T-cell (primary cell): ENCODE measurements at regions of chr5 and their contacts with region 1.

Region 1: GRCh38 chr5:118987988-118988865 is at the start of gene DTWD2:
- DNase-seq: peak; percentile 81 to 95 (median 88)
- ATAC-seq: peak; percentile 88 to 95 (median 93)
- H3K4me3 ChIP-seq: peak within 1 kb of the TSS; percentile 39 to 62
- H3K4me3 Mint-ChIP-seq: peak within 1 kb of the TSS; percentile 74 to 79 (median 77)
- H3K27ac ChIP-seq: peak within 1 kb of the TSS; percentile 55
- H3K27ac Mint-ChIP-seq: peak within 1 kb of the TSS; percentile 66 to 72
- H3K4me1 ChIP-seq: peaks cover 4 to 8% of the 10 kb centered on the region in 2 experiments
- H3K4me1 Mint-ChIP-seq: peaks cover 24 to 35% (median 24%) of the 10 kb centered on the region in 3 donors
- H3K27me3 ChIP-seq: no peaks in the 10 kb centered on the region
- H3K27me3 Mint-ChIP-seq: no peaks in the 10 kb centered on the region
- total RNA-seq, gene DTWD2: 3.0 to 4.4 (median 3.2) TPM

Region 2: GRCh38 chr5:118806571-118806970 is 181.7 kb before region 1 on chr5:
- CTCF ChIA-PET with region 1: no interaction called
- POLR2A ChIA-PET with region 1: no interaction called
- DNase-seq: no peak
- ATAC-seq: no peak
- H3K4me3 ChIP-seq: no peak overlapping the region
- H3K4me3 Mint-ChIP-seq: no peak overlapping the region
- H3K27ac ChIP-seq: no peak overlapping the region
- H3K27ac Mint-ChIP-seq: no peak overlapping the region
- H3K4me1 ChIP-seq: no peaks in the 10 kb centered on the region
- H3K4me1 Mint-ChIP-seq: no peaks in the 10 kb centered on the region
- H3K27me3 ChIP-seq: no peaks in the 10 kb centered on the region
- H3K27me3 Mint-ChIP-seq: no peaks in the 10 kb centered on the region

Region 3: DNA sequence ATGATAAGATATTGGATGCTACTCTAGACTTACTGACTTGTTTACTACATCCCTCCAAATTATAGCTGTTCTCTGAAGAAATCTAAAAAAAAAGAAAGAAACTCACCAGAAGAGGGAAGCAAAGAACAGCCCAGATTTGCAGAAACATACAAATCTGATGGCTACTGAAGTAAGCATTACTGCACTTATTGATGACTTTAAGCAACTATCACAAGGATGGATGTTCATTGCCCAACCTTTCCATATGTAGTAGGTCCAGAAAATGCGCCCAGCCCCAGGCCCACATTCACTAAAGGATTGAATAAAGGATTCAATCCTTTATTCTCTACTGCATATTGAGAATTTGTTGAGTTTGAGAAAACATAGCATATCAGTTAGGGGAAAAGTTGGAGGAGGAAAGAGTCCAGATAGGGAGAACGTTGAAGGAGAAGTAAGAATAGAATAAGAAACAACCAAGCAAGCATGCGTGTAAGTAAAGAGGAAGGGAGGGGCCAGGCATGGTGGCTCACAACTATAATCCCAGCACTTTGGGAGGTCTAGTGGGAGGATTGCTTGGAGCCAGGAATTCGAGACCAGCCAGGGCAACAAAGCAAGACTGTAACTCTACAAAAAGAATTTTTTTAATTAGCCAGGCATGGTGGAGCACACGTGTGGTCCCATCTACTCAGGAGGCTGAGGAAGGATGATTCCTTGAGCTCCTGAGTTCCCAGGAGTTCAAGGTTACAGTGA is 34.0 kb after region 1 on chr5:
- CTCF ChIA-PET with region 1: interaction called, 3 to 10 read pairs
- POLR2A ChIA-PET with region 1: interaction called in 1 of 2 experiments, 3 read pairs
- DNase-seq: peak in 1 of 35 experiments; percentile 56
- ATAC-seq: peak; percentile 31 to 55 (median 48)
- H3K4me3 ChIP-seq: no peak overlapping the region
- H3K4me3 Mint-ChIP-seq: no peak overlapping the region
- H3K27ac ChIP-seq: no peak overlapping the region
- H3K27ac Mint-ChIP-seq: peak overlapping the region in 1 of 2 donors; percentile 59
- H3K4me1 ChIP-seq: no peaks in the 10 kb centered on the region
- H3K4me1 Mint-ChIP-seq: peaks cover 5 to 7% (median 5%) of the 10 kb centered on the region in 3 donors
- H3K27me3 ChIP-seq: no peaks in the 10 kb centered on the region
- H3K27me3 Mint-ChIP-seq: no peaks in the 10 kb centered on the region

Region 4: DNA sequence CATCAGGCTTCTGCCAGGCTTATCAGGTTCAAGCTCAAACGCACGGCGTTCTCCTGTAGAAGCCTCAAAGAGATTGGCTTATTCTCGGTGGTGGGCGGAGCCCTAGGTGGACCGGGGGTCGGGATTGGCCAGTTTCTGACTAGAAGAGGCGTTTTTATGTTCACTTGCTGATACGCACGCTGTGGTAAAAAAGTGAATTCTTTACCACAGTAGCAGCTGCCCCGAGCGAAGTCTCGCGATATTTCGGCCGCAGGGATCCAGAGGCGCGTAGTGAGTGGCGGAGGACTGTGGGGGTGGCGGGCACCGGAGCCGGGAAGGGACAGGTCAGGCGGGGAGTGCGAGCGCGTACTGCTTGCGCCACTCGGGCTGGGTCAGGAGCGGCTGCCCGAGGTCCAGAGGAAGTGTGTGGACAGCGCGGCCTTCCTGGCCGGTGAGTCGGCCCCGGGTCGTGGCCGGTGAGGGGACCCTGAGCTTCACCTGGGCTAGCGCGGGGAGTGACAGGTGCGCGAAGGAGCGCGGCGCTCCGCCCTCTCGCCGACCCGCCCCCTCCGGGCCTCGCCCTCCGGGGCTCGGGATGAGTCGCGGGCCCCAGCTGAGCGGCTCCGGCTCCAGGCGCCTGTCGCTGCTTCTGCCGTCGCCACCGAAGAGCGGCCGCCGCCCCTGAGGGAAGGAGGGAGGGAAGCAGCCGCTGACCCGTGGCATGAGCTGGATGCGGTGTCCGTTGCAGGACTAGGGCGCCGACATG is 82.8 kb after region 1 on chr5 and contains the start of gene DMXL1:
- CTCF ChIA-PET with region 1: interaction called in 1 of 2 experiments, 21 read pairs
- POLR2A ChIA-PET with region 1: no interaction called
- DNase-seq: peak; percentile 92 to 99 (median 98)
- ATAC-seq: peak; percentile 84 to 87 (median 86)
- H3K4me3 ChIP-seq: peak within 1 kb of the TSS; percentile 83 to 94
- H3K4me3 Mint-ChIP-seq: peak within 1 kb of the TSS; percentile 91 to 99 (median 99)
- H3K27ac ChIP-seq: peak within 1 kb of the TSS; percentile 97
- H3K27ac Mint-ChIP-seq: peak within 1 kb of the TSS; percentile 99
- H3K4me1 ChIP-seq: peaks cover 12 to 17% of the 10 kb centered on the region in 2 experiments
- H3K4me1 Mint-ChIP-seq: peaks cover 35 to 38% (median 36%) of the 10 kb centered on the region in 3 donors
- H3K27me3 ChIP-seq: no peaks in the 10 kb centered on the region
- H3K27me3 Mint-ChIP-seq: no peaks in the 10 kb centered on the region
- total RNA-seq, gene DMXL1: 25.8 to 37.2 (median 28.2) TPM

Region 5: GRCh38 chr5:119285070-119285916 is 297.1 kb after region 1 on chr5:
- CTCF ChIA-PET with region 1: no interaction called
- POLR2A ChIA-PET with region 1: no interaction called
- DNase-seq: no peak
- ATAC-seq: peak in 2 of 4 experiments; percentile 41 to 64
- H3K4me3 ChIP-seq: peak overlapping the region in 1 of 2 donors; percentile 35
- H3K4me3 Mint-ChIP-seq: peak overlapping the region; percentile 49 to 100 (median 78)
- H3K27ac ChIP-seq: peak overlapping the region; percentile 92
- H3K27ac Mint-ChIP-seq: peak overlapping the region; percentile 94 to 96
- H3K4me1 ChIP-seq: peaks cover 62 to 96% of the 10 kb centered on the region in 2 experiments
- H3K4me1 Mint-ChIP-seq: peaks cover 99 to 100% (median 99%) of the 10 kb centered on the region in 3 donors
- H3K27me3 ChIP-seq: no peaks in the 10 kb centered on the region
- H3K27me3 Mint-ChIP-seq: no peaks in the 10 kb centered on the region

Region 6: GRCh38 chr5:119418531-119419116 is 430.4 kb after region 1 on chr5:
- CTCF ChIA-PET with region 1: interaction called, 21 to 41 read pairs
- POLR2A ChIA-PET with region 1: interaction called in 1 of 2 experiments, 3 read pairs
- DNase-seq: no peak
- ATAC-seq: no peak
- H3K4me3 ChIP-seq: no peak overlapping the region
- H3K4me3 Mint-ChIP-seq: no peak overlapping the region
- H3K27ac ChIP-seq: no peak overlapping the region
- H3K27ac Mint-ChIP-seq: no peak overlapping the region
- H3K4me1 ChIP-seq: peaks cover 0 to 5% of the 10 kb centered on the region in 2 experiments
- H3K4me1 Mint-ChIP-seq: peaks cover 11 to 14% (median 12%) of the 10 kb centered on the region in 3 donors
- H3K27me3 ChIP-seq: peaks cover 0 to 3% of the 10 kb centered on the region in 2 experiments
- H3K27me3 Mint-ChIP-seq: no peaks in the 10 kb centered on the region

Region 7: DNA sequence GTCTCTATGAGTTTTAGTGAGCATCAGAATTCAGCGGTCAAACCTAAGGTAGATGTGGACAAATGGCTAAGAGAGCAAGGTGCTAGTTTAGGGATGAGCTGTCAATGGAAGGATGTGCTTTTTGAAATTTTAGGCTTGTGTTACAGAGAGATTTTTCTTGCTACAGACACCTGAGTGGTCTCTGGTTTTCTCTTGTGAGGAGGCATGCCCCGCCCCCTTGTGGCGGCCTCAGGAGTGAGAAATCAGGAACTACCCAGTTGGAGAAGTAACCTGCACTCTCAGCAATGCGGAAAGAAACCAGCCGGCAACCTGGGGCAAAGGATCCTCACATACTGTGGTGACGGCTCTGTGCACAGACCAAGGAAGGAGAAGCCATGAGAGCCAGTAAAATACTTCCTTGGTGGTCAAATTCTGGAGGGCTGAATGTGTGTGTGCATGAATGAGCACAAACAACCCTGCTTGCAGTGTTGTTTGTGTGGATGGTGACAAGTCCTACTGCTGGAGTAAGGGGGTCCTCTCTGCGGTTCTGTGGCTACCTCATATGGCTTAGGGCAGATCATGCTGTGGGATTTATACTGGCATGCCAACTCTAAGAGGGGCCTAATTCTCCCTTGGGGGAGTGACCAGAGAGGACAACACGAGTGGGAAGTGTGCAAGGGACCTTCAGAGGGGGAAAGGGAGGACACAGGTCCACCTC is 447.4 kb after region 1 on chr5:
- CTCF ChIA-PET with region 1: interaction called, 5 to 19 read pairs
- POLR2A ChIA-PET with region 1: interaction called in 1 of 2 experiments, 5 read pairs
- DNase-seq: peak; percentile 37 to 79 (median 68)
- ATAC-seq: peak; percentile 76 to 81 (median 79)
- H3K4me3 ChIP-seq: no peak overlapping the region
- H3K4me3 Mint-ChIP-seq: no peak overlapping the region
- H3K27ac ChIP-seq: no peak overlapping the region
- H3K27ac Mint-ChIP-seq: no peak overlapping the region
- H3K4me1 ChIP-seq: peaks cover 0 to 4% of the 10 kb centered on the region in 2 experiments
- H3K4me1 Mint-ChIP-seq: peaks cover 7 to 17% (median 9%) of the 10 kb centered on the region in 3 donors
- H3K27me3 ChIP-seq: peaks cover 0 to 22% of the 10 kb centered on the region in 2 experiments
- H3K27me3 Mint-ChIP-seq: peaks cover 16 to 39% of the 10 kb centered on the region in 2 donors